ENCODE measurements at regions of chr17 and their contacts with region 1.

Region 1: GRCh38 chr17:38702166-38702899 is 2.7 kb upstream of the MLLT6 start:
- DNase-seq: peak; percentile 85
- H3K4me3 ChIP-seq: peak overlapping the region; percentile 81
- H3K27ac ChIP-seq: peak overlapping the region; percentile 92
- H3K4me1 ChIP-seq: peaks cover 36% of the 10 kb centered on the region
- CTCF ChIP-seq: no peak

Region 2: DNA sequence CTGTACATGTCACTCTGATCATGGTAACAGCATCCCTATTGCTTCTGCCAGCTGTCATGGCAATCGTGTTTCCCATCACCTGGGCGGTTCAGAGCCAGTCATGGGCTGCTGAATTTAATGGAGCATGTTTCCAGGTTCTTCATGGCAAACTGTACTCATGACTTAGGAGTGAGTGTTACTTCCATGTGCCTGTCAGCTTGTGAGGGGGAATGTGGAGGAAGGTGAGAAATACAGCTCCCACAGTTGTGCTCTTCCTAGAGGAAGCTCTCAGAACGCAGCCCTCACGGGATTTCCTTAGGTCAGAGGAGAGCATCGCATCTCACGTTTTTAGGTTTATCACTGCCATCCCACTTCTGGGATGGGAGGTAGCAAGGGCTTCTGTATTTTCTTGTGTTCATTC is 302.0 kb before region 1 on chr17:
- CTCF ChIA-PET with region 1: no interaction called
- POLR2A ChIA-PET with region 1: no interaction called
- intact Hi-C with region 1: no loop called
- DNase-seq: no peak
- H3K4me3 ChIP-seq: no peak overlapping the region
- H3K27ac ChIP-seq: no peak overlapping the region
- H3K4me1 ChIP-seq: peaks cover 5% of the 10 kb centered on the region
- CTCF ChIP-seq: no peak

Region 3: DNA sequence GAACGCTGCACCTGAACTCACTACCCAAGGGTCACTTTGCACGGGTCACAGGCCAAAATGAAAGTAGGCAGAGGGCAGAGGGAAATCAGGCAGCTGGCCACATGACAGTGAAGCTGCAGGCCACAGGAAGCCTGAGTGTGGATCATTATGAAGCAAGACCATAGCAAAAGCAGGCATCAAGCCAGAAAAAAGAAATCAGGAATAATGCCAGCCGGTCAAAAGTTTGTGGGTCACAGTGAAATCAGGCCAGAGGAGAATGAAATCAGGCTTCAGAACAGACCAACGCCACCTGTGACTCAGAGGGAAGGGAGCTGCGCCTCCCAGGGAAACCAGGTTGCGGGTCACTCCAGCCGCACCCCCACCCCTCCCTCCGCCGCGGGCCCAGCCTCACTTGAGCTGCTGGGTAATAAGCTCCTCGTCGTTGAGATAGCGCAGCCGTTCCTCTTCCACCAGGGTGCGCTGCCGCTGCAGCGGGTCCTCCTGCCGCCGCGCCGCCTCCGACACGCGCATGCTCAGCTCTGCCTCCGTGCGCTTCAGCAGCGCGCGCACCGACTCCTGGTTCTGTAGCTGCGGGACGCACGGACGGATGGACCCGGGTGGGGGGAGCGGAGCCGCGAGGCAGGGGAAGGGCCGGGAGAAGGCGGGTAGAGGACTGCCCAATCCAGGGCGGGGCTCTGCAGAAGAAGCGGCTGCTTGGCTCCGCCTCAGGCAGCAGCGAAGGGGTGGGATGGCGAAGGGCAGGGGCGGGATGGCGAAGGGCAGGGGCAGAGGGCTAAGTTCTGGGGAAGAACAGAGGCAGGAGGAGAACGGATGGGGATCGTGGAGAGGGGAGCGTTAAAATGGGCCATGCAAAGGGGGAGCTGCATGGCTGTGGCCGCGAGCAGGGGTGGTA is 144.3 kb before region 1 on chr17:
- CTCF ChIA-PET with region 1: no interaction called
- POLR2A ChIA-PET with region 1: no interaction called
- intact Hi-C with region 1: no loop called
- DNase-seq: peak; percentile 93
- H3K4me3 ChIP-seq: peak overlapping the region; percentile 64
- H3K27ac ChIP-seq: no peak overlapping the region
- H3K4me1 ChIP-seq: peaks cover 23% of the 10 kb centered on the region
- CTCF ChIP-seq: peak; percentile 86

Region 4: DNA sequence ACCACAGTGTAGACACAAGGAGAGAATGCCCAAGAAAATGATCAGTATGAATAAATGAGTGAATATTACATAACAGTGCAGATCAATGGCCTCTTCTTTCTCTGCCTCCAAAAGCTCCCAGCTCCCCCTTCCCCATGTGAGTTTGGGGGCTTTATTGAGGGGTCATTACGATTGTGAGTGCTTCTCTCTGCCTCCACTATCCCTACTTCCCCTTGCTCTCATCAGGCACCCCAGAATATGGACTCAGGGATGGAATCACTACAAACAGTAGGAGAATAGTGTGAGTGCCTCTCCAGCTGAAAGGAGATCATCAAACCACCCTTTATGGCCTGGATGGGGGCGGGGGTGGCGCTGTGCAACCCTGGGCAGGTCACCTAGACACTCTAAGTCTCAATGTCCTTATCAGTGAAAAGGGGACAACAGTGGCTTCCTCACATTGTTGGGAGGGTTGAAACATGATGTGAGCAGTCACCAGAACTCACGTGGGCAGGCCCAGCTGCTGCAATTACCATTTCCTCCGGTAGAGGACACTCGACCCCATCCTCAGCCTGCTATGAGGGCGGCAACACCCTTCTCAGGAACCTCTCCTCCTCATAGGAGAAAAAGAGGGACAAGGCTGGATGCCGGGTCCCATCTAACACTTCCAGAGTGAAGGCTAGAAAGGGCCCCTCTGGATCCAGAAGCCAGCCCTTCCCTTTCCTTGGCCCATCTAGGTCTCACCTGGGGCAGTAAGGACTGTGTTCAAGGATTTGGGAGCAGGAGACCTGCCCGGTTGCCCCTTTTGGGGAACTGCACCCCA is 25.4 kb before region 1 on chr17:
- CTCF ChIA-PET with region 1: no interaction called
- POLR2A ChIA-PET with region 1: no interaction called
- intact Hi-C with region 1: loop called (anchors 1 kb)
- DNase-seq: peak; percentile 84
- H3K4me3 ChIP-seq: no peak overlapping the region
- H3K27ac ChIP-seq: peak overlapping the region; percentile 17
- H3K4me1 ChIP-seq: peaks cover 37% of the 10 kb centered on the region
- CTCF ChIP-seq: peak; percentile 98

Region 5: DNA sequence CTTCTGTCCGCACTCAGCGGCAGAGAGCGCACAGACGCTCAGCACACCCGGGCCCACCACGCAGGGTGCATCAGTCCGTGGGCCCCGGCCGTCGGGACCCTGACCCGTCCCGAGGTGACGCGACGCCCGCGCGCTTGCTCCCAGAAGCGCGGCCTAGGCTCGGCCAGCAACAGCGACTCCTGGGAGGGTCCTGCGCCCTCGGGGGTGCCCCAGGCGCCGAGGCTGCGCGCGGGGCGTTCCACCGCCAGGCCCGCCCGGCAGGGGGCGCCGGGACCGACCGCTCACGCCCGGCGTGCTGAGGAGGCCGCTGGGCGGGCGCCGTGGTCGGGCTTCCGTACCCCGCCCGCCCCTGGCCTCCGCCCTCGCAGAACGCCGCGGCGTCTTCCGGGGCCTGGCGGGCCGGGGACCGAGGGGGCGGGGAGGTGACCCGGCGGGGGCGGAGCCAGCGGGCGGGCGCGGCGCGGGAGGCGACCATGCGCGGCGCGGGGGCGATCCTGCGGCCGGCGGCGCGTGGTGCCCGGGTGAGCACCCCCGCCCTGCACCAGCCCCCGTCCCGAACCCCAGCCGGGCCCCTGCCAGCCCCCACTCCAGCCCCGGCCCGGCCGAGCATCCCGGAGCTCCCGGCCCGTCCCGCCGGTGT is 27.7 kb after region 1 on chr17 and contains the start of gene CISD3:
- CTCF ChIA-PET with region 1: interaction called, 4 read pairs
- POLR2A ChIA-PET with region 1: interaction called, 4 read pairs
- intact Hi-C with region 1: loop called (anchors 1 kb)
- DNase-seq: peak; percentile 95
- H3K4me3 ChIP-seq: peak within 1 kb of the TSS; percentile 82
- H3K27ac ChIP-seq: peak within 1 kb of the TSS; percentile 39
- H3K4me1 ChIP-seq: peaks cover 80% of the 10 kb centered on the region
- CTCF ChIP-seq: peak; percentile 75
- total RNA-seq, gene CISD3: 11.4 and 13.4 TPM in 2 replicates

Region 6: DNA sequence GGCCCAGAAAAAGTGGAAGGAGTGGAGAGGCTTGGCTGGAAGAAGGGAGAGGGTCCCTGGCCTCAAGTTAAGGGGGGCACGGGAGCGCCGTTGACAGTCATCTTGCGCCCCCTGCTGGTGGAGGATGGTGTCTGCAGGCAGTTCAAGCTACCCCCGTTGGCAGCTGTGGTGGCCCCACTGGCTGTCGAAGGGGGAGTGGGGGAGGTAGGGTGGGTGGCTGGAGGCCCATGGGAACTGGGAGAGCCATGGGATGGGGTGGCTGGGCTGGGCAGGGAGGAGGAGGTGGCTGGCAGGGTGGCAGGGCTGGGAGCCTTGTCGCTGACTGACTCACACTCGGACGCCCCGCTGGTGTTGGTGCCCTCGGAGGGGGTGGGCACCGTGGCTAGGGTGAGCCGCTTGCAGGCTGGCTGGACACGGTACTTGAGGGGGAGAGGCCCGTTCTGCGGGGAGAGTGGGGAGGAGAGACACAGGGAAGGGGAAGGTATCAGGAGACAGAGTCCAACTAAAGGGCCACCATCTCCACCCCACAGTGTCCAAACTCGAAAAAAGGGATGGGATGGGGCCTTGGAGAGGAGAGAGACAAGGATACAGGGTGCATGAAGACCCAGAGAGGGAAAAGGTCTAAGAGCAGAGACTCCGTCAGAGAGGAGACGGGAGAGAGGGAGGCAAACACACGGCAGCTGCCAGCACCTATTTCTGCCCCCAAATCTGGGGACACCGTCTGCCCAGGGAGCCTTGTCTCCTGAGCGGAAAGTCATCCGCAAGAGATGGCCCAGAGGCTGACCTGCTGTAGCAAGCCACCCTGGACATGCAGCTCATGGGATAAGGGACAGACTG is 33.0 kb after region 1 on chr17:
- CTCF ChIA-PET with region 1: no interaction called
- POLR2A ChIA-PET with region 1: interaction called, 4 read pairs
- intact Hi-C with region 1: loop called (anchors 1 kb)
- DNase-seq: peak; percentile 67
- H3K4me3 ChIP-seq: no peak overlapping the region
- H3K27ac ChIP-seq: no peak overlapping the region
- H3K4me1 ChIP-seq: peaks cover 48% of the 10 kb centered on the region
- CTCF ChIP-seq: peak; percentile 91

Region 7: GRCh38 chr17:38752119-38752929 is 50.0 kb after region 1 on chr17 and contains the start of gene PSMB3:
- CTCF ChIA-PET with region 1: no interaction called
- POLR2A ChIA-PET with region 1: no interaction called
- intact Hi-C with region 1: loop called (anchors 2 kb)
- DNase-seq: peak; percentile 100
- H3K4me3 ChIP-seq: peak within 1 kb of the TSS; percentile 79
- H3K27ac ChIP-seq: peak within 1 kb of the TSS; percentile 76
- H3K4me1 ChIP-seq: peaks cover 40% of the 10 kb centered on the region
- CTCF ChIP-seq: no peak
- total RNA-seq, gene PSMB3: 290 and 348 TPM in 2 replicates

Measured in OCI-LY7 (cell line).